ENCODE measurements at regions of chr11 and their contacts with region 1.

Region 1: DNA sequence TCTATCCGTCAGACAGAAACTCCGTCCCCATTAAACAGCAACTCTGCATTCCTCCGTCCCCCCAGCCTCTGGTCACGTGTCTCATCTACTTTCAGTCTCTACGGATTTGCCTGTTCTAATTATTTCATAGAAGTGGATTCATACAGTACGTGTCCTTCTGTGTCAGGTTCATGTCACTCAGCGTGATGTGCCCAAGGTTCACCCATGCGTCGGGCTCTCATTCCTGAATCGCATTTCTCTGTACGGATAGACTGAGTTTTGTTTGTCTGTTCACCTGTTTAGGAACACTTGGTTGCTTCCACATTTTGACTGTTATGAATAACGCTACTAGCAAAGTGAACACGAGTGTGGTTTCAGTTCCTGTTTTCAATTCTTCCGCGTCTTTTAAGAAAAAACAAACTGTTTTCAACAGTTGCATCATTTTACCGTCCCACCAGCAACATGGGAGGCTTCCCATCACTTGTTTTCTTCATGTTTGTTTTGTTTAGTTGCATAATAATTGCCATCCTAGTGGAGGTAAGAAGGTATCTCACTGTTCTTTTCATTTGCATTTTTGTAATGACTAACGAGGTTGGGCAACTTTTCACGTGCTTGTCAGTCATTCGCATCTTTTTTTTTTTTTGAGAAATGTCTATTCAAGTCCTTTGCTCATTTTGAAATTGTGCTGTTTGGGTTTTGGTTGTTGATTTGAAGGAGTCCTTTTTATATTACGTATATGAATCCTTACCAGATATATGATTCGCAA is 8.9 kb upstream of the NLRP6 start:
- DNase-seq: peak; percentile 54
- ATAC-seq: peak; percentile 71
- H3K4me3 Mint-ChIP-seq: peak overlapping the region; percentile 90
- H3K27ac Mint-ChIP-seq: peak overlapping the region; percentile 99
- H3K4me1 Mint-ChIP-seq: peaks cover 40% of the 10 kb centered on the region
- H3K27me3 Mint-ChIP-seq: no peaks in the 10 kb centered on the region
- CTCF ChIP-seq: no peak

Region 2: GRCh38 chr11:236774-237767 is 32.2 kb before region 1 on chr11 and contains the start of gene PSMD13:
- CTCF ChIA-PET with region 1: no interaction called
- POLR2A ChIA-PET with region 1: interaction called, 23 read pairs
- intact Hi-C with region 1: loop called (anchors 1 kb)
- DNase-seq: peak; percentile 85
- ATAC-seq: peak; percentile 78
- H3K4me3 Mint-ChIP-seq: peak within 1 kb of the TSS; percentile 98
- H3K27ac Mint-ChIP-seq: peak within 1 kb of the TSS; percentile 99
- H3K4me1 Mint-ChIP-seq: peaks cover 41% of the 10 kb centered on the region
- H3K27me3 Mint-ChIP-seq: no peaks in the 10 kb centered on the region
- CTCF ChIP-seq: no peak
- total RNA-seq, gene PSMD13: 147 and 149 TPM in 2 replicates

Region 3: DNA sequence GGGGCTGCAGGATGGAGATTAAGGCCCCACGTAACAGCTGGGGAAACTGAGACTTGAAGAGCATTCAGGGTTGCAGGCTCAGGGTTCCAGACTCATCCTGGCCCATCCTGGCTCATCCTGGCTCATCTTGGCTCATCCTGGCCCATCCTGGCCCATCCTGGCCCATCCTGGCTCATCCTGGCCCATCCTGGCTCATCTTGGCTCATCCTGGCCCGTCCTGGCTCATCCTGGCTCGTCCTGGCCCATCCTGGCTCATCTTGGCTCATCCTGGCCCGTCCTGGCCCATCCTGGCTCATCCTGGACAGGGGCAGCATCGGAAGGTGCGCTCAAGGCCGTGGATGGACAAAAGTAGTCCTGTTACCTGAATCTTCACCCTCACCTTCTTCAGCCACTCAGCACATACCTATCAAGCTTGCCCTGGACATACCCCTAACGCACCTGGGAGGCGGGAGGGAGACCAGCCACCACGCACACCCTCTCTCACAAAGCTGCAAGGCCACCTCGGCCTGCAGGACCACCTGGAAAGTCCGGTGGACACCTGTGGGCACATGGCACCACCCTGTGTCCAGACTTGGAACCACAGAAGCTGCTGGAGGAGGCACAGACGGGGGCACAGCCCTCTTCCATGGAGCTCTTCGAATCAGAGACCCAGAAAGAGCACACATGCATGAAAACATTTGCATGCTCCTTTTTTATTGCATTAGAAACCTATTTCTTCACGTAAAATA is 11.4 kb before region 1 on chr11:
- CTCF ChIA-PET with region 1: interaction called, 3 read pairs
- POLR2A ChIA-PET with region 1: interaction called, 46 read pairs
- intact Hi-C with region 1: no loop called
- DNase-seq: no peak
- ATAC-seq: no peak
- H3K4me3 Mint-ChIP-seq: no peak overlapping the region
- H3K27ac Mint-ChIP-seq: peak overlapping the region; percentile 61
- H3K4me1 Mint-ChIP-seq: peaks cover 33% of the 10 kb centered on the region
- H3K27me3 Mint-ChIP-seq: no peaks in the 10 kb centered on the region
- CTCF ChIP-seq: no peak

Region 4: DNA sequence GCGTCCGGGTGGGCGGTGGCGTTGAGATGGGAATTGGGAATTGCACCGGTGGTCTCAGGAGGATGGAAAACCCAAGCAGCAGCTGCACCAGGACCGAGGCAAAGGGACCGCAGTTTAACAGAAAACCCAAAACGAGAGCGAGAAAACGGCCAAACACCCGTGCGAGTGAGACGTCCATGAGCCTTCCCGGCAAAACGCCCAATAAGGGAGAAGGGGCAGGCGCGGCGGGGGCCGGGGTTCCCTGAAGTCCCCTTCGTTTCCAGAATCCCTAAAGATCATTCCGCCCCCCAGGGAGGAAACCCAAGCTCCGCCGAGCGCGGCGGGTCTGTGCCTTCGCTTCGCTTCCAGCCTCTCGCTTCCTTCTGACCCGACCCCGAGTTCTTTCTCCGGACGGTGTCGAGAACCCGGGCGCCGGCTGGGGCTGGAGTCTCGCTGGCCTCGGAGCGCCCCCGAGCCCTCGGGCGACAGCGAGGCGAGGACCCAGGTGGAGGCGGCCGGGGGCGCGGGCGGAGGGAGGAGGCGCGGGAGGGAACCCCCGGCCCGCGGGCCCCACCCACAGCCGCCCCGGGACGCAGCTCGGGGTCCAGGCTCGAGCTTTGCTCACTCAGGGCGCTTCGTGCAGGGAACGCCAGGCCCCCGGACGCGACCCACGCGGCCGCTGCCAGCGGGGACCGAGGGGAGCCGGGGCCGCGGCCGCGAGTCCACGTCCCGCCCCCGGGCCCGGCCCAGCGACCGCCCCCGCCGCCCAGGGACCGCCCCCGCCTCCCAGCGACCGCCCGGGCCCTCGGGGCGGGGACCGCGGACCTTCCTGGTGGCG is 19.2 kb after region 1 on chr11 and contains the start of gene PGGHG:
- CTCF ChIA-PET with region 1: no interaction called
- POLR2A ChIA-PET with region 1: interaction called, 74 read pairs
- intact Hi-C with region 1: loop called (anchors 2 kb)
- DNase-seq: peak; percentile 78
- ATAC-seq: peak; percentile 88
- H3K4me3 Mint-ChIP-seq: peak within 1 kb of the TSS; percentile 82
- H3K27ac Mint-ChIP-seq: peak within 1 kb of the TSS; percentile 41
- H3K4me1 Mint-ChIP-seq: peaks cover 17% of the 10 kb centered on the region
- H3K27me3 Mint-ChIP-seq: peaks cover 12% of the 10 kb centered on the region
- CTCF ChIP-seq: no peak
- total RNA-seq, gene PGGHG: 62.3 and 74.1 TPM in 2 replicates

Region 5: DNA sequence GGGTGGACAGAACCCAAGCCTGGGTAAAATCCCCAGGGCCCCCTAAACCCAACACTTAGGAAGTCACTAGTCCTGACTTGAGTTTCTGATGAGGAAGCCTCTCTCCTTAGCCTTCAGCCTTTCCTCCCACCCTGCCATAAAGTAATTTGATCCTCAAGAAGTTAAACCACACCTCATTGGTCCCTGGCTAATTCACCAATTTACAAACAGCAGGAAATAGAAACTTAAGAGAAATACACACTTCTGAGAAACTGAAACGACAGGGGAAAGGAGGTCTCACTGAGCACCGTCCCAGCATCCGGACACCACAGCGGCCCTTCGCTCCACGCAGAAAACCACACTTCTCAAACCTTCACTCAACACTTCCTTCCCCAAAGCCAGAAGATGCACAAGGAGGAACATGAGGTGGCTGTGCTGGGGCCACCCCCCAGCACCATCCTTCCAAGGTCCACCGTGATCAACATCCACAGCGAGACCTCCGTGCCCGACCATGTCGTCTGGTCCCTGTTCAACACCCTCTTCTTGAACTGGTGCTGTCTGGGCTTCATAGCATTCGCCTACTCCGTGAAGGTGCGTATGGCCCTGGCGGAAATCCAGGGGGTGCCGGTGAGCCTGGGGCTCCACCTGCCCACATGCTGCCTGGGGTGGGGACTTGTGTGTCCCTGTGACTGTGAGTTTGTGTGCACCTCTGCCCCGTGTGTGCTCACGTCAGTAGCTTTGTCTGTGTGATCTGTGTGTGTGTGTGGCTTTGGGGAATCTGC is 44.6 kb after region 1 on chr11 and contains the start of gene IFITM1:
- CTCF ChIA-PET with region 1: no interaction called
- POLR2A ChIA-PET with region 1: interaction called, 15 read pairs
- intact Hi-C with region 1: no loop called
- DNase-seq: peak; percentile 42
- ATAC-seq: peak; percentile 16
- H3K4me3 Mint-ChIP-seq: peak within 1 kb of the TSS; percentile 81
- H3K27ac Mint-ChIP-seq: peak within 1 kb of the TSS; percentile 89
- H3K4me1 Mint-ChIP-seq: peaks cover 60% of the 10 kb centered on the region
- H3K27me3 Mint-ChIP-seq: no peaks in the 10 kb centered on the region
- CTCF ChIP-seq: no peak
- total RNA-seq, gene IFITM1: 21.2 and 25.3 TPM in 2 replicates

Region 6: DNA sequence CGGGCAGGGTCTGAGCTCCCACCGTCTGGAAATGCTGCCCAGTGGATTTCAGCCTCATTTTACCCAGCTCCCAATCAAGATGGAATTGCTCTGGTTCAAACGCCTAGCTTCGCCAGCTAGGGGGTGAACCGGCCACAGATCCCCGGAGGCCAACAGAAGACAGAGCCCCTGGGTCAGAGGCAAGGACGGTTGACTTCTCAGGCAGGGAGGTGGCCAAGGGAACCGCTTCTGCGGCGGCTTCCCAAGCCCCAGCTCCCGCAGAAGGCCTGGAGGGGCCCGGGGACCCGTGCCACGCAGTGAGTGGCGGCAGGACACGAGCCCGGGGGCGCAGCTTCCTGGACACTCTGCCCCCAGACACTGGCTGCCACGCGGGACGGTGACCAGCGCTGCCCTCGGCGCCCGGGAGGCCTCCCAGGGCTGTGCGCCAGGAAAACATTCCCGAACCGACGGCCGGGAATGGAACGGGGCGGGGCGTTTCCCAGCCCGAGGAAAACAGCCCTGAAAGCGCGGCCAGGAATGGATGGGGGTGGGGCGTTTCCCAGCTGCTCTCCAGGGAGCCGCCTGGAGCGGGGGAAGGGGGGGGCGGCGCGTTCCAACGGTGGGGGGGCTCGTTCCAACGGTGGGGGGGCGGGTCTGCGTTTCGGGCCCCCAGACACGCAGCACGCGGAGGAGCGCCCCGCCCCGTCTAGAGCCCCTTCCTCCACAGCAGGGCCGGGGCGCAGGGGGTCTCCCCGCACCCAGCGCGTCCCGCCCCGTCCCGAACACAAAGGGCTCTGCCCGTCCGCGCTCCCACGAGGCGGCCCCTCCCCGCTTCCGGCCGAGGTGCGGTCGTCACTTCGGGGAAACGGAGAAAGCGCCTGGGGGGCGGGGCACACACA is 86.5 kb after region 1 on chr11:
- CTCF ChIA-PET with region 1: no interaction called
- POLR2A ChIA-PET with region 1: interaction called, 38 read pairs
- intact Hi-C with region 1: loop called (anchors 1 kb)
- DNase-seq: peak; percentile 70
- ATAC-seq: peak; percentile 72
- H3K4me3 Mint-ChIP-seq: peak overlapping the region; percentile 77
- H3K27ac Mint-ChIP-seq: peak overlapping the region; percentile 90
- H3K4me1 Mint-ChIP-seq: peaks cover 26% of the 10 kb centered on the region
- H3K27me3 Mint-ChIP-seq: no peaks in the 10 kb centered on the region
- CTCF ChIP-seq: no peak

Region 7: DNA sequence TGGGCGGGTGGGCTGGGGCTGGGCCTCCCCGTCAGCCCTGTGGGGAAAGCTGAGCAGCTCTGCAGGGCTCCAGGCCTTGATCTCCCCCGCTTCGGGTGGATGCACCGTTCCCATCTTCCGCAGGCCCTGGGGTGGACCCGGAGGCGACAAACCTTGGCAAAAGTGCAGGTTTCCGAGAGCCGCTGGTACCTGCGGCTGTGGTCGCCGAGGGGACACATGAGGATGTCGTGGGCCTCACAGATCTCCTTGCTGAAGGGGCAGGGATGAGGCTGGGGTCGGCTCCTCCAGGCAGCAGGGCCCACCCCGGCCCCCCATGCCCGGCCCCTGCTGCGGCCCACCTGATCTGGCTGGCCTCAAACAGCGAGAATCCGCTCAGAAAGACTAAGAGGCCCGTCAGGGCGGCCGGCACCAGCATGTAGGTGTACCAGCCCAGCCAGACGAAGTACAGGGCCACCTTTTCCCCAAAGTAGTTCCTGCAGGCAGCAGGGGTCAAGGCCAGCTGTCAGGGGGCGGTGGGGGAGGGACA is 160.7 kb after region 1 on chr11:
- CTCF ChIA-PET with region 1: no interaction called
- POLR2A ChIA-PET with region 1: no interaction called
- intact Hi-C with region 1: no loop called
- DNase-seq: no peak
- ATAC-seq: no peak
- H3K4me3 Mint-ChIP-seq: no peak overlapping the region
- H3K27ac Mint-ChIP-seq: no peak overlapping the region
- H3K4me1 Mint-ChIP-seq: no peaks in the 10 kb centered on the region
- H3K27me3 Mint-ChIP-seq: no peaks in the 10 kb centered on the region
- CTCF ChIP-seq: no peak